AG04449 (cell line): ENCODE measurements at regions of chr3 and their contacts with region 1.

Region 1: DNA sequence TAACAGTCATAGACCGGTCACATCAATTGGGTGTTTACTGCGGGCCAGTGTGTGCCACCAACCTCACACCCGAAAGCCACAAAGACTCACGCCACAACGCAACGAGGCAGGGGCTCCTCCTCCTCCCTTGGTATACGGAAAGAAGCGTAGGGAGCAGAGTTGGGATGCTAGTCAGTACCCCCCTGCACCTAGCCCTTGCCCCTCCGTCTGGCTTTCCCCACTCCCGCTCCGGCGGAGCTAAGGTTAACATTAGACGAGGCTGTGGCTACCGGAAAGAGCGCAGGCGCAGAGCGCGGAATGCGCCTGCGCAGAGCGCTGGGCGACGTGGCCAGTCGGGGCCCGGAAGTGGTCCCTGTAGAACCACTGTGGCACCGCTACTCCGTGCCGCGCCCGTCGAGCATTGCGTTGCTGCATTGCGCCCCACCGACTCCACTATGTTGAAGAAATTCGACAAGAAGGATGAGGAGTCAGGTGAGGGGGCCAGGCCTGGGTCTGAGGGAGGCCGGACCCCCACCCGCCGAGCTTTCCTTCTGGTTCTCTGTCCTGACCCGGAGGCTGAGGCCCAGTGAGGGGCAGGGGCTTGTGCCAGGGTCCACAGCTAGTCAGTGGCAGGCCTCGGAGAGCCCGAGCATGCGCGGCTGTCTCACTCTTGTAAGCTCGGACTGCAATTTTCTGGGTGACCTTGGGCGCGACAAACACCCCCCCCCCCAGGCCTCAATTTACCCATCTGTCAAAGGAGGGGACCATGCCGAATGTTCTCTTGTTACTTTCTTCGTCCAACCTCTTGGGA is at the start of gene COPG1:
- DNase-seq: peak; percentile 14
- H3K4me3 ChIP-seq: peak within 1 kb of the TSS; percentile 98
- CTCF ChIP-seq: no peak

Region 2: DNA sequence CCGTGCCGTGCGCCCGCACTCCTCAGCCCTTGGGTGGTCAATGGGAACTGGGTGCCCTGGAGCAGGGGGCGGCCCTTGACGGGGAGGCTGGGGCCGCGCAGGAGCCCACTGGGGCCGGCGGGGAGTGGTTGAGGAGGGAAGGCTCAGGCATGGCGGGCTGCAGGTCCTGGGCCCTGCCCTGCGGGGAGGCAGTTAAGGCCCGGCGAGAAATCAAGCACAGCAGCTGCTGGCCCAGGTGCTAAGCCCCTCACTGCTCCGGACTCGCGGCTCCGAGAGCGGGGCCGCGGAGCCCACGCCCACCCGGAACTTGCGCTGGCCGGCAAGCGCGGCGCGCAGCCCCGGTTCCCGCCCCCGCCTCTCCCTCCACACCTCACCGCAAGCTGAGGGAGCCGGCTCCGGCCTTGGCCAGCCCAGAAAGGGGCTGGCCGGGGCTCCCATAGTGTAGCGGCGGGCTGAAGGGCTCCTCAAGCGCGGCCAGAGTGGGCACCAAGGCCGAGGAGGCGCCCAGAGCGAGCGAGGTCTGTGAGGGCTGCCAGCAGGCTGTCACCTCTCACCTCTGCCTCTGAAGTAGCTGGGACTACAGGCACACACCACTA is 181.1 kb before region 1 on chr3:
- CTCF ChIA-PET with region 1: interaction called, 16 read pairs
- POLR2A ChIA-PET with region 1: no interaction called
- DNase-seq: no peak
- H3K4me3 ChIP-seq: peak overlapping the region; percentile 36
- CTCF ChIP-seq: no peak

Region 3: DNA sequence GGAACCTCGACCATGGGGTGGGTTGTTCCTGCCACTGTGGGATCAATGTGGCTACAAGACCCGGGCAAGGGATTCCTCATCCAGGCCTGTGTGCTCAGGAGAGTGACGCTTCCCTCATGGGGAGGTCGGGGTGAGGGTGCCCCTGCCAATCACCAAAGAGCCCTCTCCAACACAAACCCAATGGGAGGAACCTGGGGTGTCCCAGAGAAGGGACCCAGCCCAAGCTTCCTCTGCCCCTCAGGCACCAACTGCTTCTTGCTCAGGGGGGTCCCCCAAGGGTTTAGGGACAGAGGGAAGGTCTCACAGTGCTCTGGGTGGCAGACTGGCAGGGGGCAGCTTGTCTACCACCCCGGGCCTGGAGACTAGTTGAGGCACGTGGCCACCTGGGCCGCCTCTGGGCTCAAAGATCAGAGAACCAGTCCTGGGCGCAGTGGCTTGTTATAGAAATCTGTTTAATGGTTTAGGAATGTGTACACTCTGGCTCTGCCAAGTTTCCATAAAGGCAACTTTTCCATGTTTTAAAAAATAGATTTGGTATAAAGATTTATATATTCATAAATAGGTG is 162.3 kb before region 1 on chr3:
- CTCF ChIA-PET with region 1: no interaction called
- POLR2A ChIA-PET with region 1: no interaction called
- DNase-seq: no peak
- H3K4me3 ChIP-seq: no peak overlapping the region
- CTCF ChIP-seq: no peak

Region 4: GRCh38 chr3:129160891-129161859 is 88.3 kb before region 1 on chr3 and contains the start of gene ISY1:
- CTCF ChIA-PET with region 1: interaction called, 65 read pairs
- POLR2A ChIA-PET with region 1: interaction called, 18 read pairs
- DNase-seq: peak; percentile 63
- H3K4me3 ChIP-seq: peak within 1 kb of the TSS; percentile 80
- CTCF ChIP-seq: peak; percentile 89

Region 5: DNA sequence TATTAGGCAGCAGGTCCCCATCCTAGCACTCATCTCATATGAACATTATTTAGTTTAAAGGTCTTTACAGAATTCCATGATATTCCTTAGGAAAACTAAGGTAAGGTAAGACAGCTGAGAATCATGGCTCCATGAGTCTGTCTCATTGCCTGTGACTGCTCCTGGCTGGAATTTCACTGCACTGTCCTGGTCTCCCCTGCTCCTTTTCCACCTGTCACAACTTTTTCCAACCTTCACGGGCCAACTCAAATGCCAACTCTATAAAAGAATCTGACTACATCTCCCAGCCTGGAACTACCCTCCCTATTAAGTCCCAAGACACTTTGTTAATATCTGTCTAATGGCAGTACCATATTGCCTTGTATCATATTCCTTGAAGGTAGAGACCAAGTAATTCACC is 73.4 kb before region 1 on chr3:
- CTCF ChIA-PET with region 1: interaction called, 65 read pairs
- POLR2A ChIA-PET with region 1: no interaction called
- DNase-seq: no peak
- H3K4me3 ChIP-seq: no peak overlapping the region
- CTCF ChIP-seq: no peak

Region 6: GRCh38 chr3:129195731-129196256 is 53.7 kb before region 1 on chr3:
- CTCF ChIA-PET with region 1: interaction called, 36 read pairs
- POLR2A ChIA-PET with region 1: interaction called, 9 read pairs
- DNase-seq: peak; percentile 87
- H3K4me3 ChIP-seq: peak overlapping the region; percentile 33
- CTCF ChIP-seq: no peak

Region 7: GRCh38 chr3:129233538-129233937 is 15.9 kb before region 1 on chr3:
- CTCF ChIA-PET with region 1: interaction called, 81 read pairs
- POLR2A ChIA-PET with region 1: interaction called, 6 read pairs
- DNase-seq: no peak
- H3K4me3 ChIP-seq: no peak overlapping the region
- CTCF ChIP-seq: no peak